ENCODE measurements at regions of chr12 and their contacts with region 1.

Region 1: DNA sequence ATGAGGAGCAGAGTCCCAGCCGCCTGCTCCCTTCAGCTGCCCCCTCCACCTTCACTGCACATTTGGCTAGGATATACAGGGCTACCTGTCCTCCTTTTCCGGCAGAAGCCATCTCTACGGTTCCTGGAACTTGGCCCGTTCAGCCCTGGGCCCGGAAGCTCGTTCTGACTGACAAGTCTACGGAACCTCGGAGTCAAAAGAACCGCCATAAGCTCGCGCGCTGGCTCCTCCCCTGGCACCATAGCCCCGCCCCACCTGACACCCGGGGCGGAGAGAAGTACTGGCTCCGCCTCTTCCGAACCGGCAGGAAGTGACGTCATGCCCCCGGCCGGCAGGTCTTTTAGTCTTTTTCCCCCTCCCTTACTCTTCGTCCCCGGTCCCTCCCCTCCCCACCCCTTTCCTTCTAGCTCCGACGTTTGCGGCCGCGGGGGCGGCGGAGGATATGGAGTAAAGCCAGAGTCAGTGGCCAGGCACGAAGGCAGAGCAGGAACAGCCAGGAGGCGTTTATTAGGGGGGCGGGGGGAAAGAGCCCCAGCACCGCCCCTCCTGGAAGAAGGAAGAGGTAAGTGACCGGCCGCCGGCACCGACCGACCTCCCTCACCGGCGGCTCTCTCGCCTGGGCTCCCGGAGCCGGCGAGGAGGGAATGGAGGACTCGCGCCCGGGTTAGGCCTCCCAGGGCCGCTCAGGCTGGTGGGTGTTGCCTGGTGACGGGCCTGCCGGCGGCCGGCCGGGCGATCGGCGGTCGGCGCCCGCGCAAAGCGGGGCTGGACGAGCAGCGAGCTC is at the starts of genes DEPDC4 and SCYL2:
- DNase-seq: peak; percentile 94 to 96
- ATAC-seq: peak; percentile 91 to 97 (median 91)
- H3K4me3 ChIP-seq: peak within 1 kb of the TSS; percentile 94
- H3K4me3 Mint-ChIP-seq: peak within 1 kb of the TSS; percentile 99
- H3K27ac ChIP-seq: peak within 1 kb of the TSS; percentile 97
- H3K27ac Mint-ChIP-seq: peak within 1 kb of the TSS; percentile 96 to 97
- H3K4me1 ChIP-seq: peaks cover 12% of the 10 kb centered on the region
- H3K4me1 Mint-ChIP-seq: peaks cover 25 to 44% of the 10 kb centered on the region in 2 donors
- H3K27me3 ChIP-seq: no peaks in the 10 kb centered on the region
- H3K27me3 Mint-ChIP-seq: no peaks in the 10 kb centered on the region
- CTCF ChIP-seq: no peak
- total RNA-seq, gene DEPDC4: 0.16 TPM in 1 of 3 donors, not detected in the others
- total RNA-seq, gene SCYL2: 48.7 to 61.0 (median 56.1) TPM

Region 2: DNA sequence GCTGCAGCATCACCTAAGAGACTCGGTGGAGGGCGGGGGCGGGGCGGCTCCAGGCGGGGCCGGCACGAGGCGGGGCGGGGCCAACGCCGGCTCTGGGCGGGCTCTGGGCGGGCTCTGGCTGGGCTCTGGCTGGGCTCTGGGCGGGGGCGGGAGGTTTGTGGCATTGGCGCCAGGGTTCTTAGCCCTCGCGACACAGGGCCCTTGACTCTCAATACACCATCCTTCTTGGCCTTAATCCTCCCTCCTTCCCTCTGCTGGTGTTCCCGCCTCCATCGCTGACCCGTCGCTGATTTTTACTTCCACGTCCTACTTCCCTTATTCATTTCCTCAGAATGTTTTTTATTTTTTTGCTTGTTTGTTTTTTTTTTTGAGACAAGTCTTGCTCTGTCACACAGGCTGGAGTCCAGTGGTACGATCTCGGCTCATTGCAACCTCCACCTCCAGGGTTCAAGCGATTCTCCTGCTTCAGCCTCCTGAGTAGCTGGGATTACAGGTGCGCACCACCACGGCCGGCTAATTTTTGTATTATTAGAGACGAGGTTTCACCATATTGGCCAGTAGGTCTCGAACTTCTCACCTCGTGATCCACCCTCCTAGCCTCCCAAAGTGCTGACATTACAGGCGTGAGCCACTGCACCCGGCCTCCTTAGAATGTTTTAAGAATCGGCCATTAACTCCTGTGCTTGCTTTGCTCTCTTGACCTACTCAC is 124.0 kb before region 1 on chr12 and contains the start of gene BLTP3B:
- intact Hi-C with region 1: loop called (anchors 1 kb)
- DNase-seq: peak; percentile 85 to 92
- ATAC-seq: peak; percentile 93 to 99 (median 95)
- H3K4me3 ChIP-seq: peak within 1 kb of the TSS; percentile 81
- H3K4me3 Mint-ChIP-seq: peak within 1 kb of the TSS; percentile 98
- H3K27ac ChIP-seq: peak within 1 kb of the TSS; percentile 92
- H3K27ac Mint-ChIP-seq: peak within 1 kb of the TSS; percentile 91 to 95
- H3K4me1 ChIP-seq: peaks cover 16% of the 10 kb centered on the region
- H3K4me1 Mint-ChIP-seq: peaks cover 38 to 39% of the 10 kb centered on the region in 2 donors
- H3K27me3 ChIP-seq: no peaks in the 10 kb centered on the region
- H3K27me3 Mint-ChIP-seq: no peaks in the 10 kb centered on the region
- CTCF ChIP-seq: no peak
- total RNA-seq, gene BLTP3B: 30.8 to 42.8 (median 30.9) TPM

Region 3: GRCh38 chr12:100356644-100357223 is 89.7 kb after region 1 on chr12 and contains the start of gene SLC17A8:
- intact Hi-C with region 1: no loop called
- DNase-seq: no peak
- ATAC-seq: no peak
- H3K4me3 ChIP-seq: no peak within 1 kb of the TSS
- H3K4me3 Mint-ChIP-seq: no peak within 1 kb of the TSS
- H3K27ac ChIP-seq: no peak within 1 kb of the TSS
- H3K27ac Mint-ChIP-seq: no peak within 1 kb of the TSS
- H3K4me1 ChIP-seq: no peaks in the 10 kb centered on the region
- H3K4me1 Mint-ChIP-seq: no peaks in the 10 kb centered on the region
- H3K27me3 ChIP-seq: no peaks in the 10 kb centered on the region
- H3K27me3 Mint-ChIP-seq: peaks cover 38 to 46% of the 10 kb centered on the region in 2 donors
- CTCF ChIP-seq: no peak
- total RNA-seq, gene SLC17A8: not detected

Region 4: DNA sequence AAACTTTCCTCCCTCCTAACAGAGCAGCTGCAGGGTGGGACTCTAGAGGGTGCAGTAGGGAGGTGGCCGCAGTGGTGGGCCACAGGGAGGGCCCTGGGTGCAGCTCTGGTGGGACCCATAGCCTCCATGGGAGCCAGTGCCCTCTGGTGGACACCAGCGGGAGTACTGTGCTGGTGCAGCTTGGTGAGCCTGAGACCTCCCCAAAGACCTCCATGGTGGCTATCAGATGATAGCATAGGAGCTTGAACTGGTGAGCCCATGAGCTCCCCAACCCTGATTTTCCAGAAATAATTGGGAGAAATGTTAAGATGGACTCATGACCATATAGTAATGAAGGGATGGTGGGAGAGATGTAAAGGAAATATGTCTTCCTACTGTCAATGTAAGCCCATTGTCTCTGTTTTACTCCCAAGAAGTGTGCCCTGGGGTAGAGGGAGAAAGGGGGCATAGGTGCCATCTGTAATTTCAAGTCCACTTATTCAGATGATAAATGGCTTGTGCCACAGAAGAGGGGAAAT is 405.1 kb after region 1 on chr12:
- intact Hi-C with region 1: no loop called
- DNase-seq: peak in 1 of 2 donors; percentile 9
- ATAC-seq: peak in 1 of 3 donors; percentile 47
- H3K4me3 ChIP-seq: no peak overlapping the region
- H3K4me3 Mint-ChIP-seq: no peak overlapping the region
- H3K27ac ChIP-seq: no peak overlapping the region
- H3K27ac Mint-ChIP-seq: no peak overlapping the region
- H3K4me1 ChIP-seq: no peaks in the 10 kb centered on the region
- H3K4me1 Mint-ChIP-seq: no peaks in the 10 kb centered on the region
- H3K27me3 ChIP-seq: no peaks in the 10 kb centered on the region
- H3K27me3 Mint-ChIP-seq: no peaks in the 10 kb centered on the region
- CTCF ChIP-seq: no peak